Sciatic nerve (tissue), 2 donors: ENCODE measurements at regions of chr10 and their contacts with region 1.

Region 1: GRCh38 chr10:79219322-79219957 is 127.8 kb upstream of the PPIF start:
- DNase-seq: no peak
- ATAC-seq: no peak

Region 2: DNA sequence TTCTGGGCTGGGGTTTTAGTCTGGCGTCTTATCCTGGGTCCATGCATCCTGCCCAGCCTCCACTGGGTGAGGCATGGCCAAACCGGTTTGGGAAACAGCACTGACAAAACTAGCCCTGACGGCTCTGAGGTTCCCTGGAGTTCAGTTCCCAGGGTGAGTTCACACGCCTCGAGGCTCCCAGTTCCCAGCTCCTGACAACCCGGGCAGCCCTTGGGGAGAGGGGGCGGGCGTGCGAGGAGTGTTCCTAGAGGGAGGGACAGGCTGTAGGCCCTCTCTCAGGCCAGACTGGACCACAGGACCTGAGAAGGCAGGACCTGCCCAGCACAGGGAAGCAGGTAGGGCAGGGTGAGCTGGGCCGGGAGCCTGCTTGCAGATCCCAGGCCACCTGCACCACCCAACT is 45.5 kb after region 1 on chr10:
- intact Hi-C with region 1: loop called (anchors 1 kb)
- DNase-seq: no peak
- ATAC-seq: no peak

Region 3: GRCh38 chr10:80741278-80741677 is 1521.8 kb after region 1 on chr10:
- intact Hi-C with region 1: no loop called
- DNase-seq: no peak
- ATAC-seq: no peak